RWPE1 (cell line): ENCODE measurements at regions of chr15 and their contacts with region 1.

Region 1: GRCh38 chr15:50148362-50148963 is 29.4 kb upstream of the ATP8B4 start:
- DNase-seq: peak; percentile 25
- H3K27ac ChIP-seq: no peak overlapping the region
- CTCF ChIP-seq: peak; percentile 84

Region 2: DNA sequence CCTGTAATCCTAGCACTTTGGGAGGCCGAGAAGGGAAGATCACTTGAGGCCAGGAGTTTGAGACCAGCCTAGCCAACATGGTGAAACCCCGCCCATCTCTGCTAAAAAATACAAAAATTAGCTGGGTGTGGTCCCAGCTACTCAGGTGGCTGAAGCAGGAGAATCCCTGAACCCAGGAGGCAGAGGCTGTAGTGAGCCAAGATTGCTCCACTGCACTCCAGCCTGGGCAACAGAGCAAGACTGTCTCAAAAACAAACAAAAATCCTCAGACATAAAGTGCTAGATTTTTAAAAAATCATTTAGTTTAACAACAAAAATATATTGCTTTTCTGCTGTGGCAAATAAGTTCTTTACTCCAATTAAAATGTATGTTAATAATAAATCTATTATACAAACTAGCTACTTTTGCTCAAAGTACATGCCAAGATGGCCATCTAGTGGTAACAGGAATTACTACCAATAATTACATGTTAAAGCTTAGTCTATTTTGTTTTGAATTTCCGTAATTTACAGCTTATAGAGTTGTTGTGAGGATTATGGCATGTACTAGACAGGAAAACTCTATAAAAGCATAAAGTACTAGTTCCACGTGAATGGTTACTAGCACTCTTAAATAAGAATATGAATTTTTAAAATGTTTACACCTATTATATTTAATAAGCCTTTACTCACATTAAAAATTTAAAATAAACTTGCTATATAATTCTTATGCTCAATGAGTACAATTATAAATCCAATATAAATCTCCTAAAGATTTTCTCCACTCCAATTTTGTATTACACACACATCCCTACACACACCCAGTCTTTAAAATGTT is 167.6 kb after region 1 on chr15:
- CTCF ChIA-PET with region 1: interaction called, 11 read pairs
- POLR2A ChIA-PET with region 1: no interaction called
- DNase-seq: peak; percentile 34
- H3K27ac ChIP-seq: no peak overlapping the region
- CTCF ChIP-seq: peak; percentile 85